Activated CD4-positive, alpha-beta T cell treated with anti-CD3 and anti-CD28 coated beads for 36 hours (primary cell): ENCODE measurements at regions of chr15 and their contacts with region 1.

Region 1: DNA sequence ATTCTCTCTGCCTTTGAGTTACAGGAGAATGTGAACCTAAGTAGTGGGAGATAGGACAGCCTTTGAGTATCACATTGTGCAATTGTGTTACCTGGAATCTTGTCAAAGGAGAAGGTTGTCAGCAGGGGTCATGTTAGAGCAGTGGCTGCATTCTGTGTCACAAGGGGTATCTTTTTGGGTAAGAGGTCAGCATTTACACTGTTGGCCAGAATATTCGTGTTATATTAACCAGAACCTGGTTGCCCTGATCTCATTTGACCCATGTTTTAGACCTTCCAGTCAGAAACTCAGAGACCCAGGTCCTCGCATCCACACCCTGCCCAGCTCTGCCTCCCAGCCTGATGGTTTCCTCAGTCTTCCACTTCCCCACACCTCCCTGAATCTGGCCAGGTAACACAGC is 27.3 kb downstream of the HDC start:
- DNase-seq: no peak
- ATAC-seq: no peak
- H3K4me3 Mint-ChIP-seq: no peak overlapping the region
- H3K27ac Mint-ChIP-seq: no peak overlapping the region
- H3K4me1 Mint-ChIP-seq: peaks cover 13% of the 10 kb centered on the region
- H3K27me3 Mint-ChIP-seq: no peaks in the 10 kb centered on the region

Region 2: DNA sequence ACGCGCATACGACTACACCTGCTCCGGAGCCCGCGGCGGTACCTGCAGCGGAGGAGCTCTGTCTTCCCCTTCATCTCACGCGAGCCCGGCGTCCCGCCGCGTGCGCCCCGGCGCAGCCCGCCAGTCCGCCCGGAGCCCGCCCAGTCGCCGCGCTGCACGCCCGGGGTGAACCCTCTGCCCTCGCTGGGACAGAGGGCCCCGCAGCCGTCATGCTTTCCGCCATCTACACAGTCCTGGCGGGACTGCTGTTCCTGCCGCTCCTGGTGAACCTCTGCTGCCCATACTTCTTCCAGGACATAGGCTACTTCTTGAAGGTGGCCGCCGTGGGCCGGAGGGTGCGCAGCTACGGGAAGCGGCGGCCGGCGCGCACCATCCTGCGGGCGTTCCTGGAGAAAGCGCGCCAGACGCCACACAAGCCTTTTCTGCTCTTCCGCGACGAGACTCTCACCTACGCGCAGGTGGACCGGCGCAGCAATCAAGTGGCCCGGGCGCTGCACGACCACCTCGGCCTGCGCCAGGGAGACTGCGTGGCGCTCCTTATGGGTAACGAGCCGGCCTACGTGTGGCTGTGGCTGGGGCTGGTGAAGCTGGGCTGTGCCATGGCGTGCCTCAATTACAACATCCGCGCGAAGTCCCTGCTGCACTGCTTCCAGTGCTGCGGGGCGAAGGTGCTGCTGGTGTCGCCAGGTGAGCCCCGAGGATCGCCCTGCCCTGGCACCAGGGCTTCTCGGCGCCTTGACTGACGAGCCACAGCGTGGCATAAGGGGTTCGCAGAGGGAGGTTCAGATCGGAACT is 55.8 kb before region 1 on chr15:
- CTCF ChIA-PET with region 1: interaction called, 4 read pairs
- POLR2A ChIA-PET with region 1: no interaction called
- intact Hi-C with region 1: loop called in 1 of 2 experiments (anchors 2 kb)
- DNase-seq: peak; percentile 73
- ATAC-seq: peak; percentile 68
- H3K4me3 Mint-ChIP-seq: peak overlapping the region; percentile 85
- H3K27ac Mint-ChIP-seq: peak overlapping the region; percentile 88
- H3K4me1 Mint-ChIP-seq: peaks cover 21% of the 10 kb centered on the region
- H3K27me3 Mint-ChIP-seq: peaks cover 27% of the 10 kb centered on the region